ENCODE measurements at regions of chr2 and their contacts with region 1.

Region 1: GRCh38 chr2:20326163-20326780 is 24.4 kb downstream of the PUM2 start:
- DNase-seq: peak; percentile 72
- H3K4me3 ChIP-seq: no peak overlapping the region
- H3K27ac ChIP-seq: no peak overlapping the region
- H3K4me1 ChIP-seq: peaks cover 23% of the 10 kb centered on the region
- H3K27me3 ChIP-seq: no peaks in the 10 kb centered on the region
- CTCF ChIP-seq: peak; percentile 83 to 84
- POLR2A ChIP-seq: no peak

Region 2: DNA sequence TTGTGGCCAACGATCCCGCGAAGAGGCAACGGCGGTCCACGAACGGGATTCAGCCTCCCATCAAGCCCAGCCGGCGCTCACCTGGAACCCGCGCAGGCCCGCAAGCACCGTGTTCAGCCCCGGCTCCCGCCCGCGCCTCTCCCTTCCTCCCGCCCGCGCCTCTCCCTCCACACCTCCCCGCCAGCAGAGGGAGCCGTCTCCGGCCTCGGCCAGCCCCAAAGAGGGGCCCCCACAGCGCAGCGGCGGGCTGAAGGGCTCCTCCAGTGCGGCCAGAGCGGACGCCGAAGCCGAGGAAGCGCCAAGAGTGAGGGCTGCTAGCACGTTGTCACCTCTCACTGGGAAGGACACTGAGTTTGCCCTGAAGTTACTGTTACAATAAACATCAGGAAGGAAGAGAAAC is 219.5 kb before region 1 on chr2:
- CTCF ChIA-PET with region 1: interaction called, 10 read pairs
- POLR2A ChIA-PET with region 1: no interaction called
- dilution Hi-C with region 1: no loop called
- intact Hi-C with region 1: loop called (anchors 10 kb)
- DNase-seq: peak; percentile 27
- H3K4me3 ChIP-seq: peak overlapping the region in 1 of 3 experiments; percentile 26
- H3K27ac ChIP-seq: no peak overlapping the region
- H3K4me1 ChIP-seq: no peaks in the 10 kb centered on the region
- H3K27me3 ChIP-seq: peaks cover 2 to 3% of the 10 kb centered on the region in 2 experiments
- CTCF ChIP-seq: peak; percentile 47 to 80
- POLR2A ChIP-seq: no peak

Region 3: DNA sequence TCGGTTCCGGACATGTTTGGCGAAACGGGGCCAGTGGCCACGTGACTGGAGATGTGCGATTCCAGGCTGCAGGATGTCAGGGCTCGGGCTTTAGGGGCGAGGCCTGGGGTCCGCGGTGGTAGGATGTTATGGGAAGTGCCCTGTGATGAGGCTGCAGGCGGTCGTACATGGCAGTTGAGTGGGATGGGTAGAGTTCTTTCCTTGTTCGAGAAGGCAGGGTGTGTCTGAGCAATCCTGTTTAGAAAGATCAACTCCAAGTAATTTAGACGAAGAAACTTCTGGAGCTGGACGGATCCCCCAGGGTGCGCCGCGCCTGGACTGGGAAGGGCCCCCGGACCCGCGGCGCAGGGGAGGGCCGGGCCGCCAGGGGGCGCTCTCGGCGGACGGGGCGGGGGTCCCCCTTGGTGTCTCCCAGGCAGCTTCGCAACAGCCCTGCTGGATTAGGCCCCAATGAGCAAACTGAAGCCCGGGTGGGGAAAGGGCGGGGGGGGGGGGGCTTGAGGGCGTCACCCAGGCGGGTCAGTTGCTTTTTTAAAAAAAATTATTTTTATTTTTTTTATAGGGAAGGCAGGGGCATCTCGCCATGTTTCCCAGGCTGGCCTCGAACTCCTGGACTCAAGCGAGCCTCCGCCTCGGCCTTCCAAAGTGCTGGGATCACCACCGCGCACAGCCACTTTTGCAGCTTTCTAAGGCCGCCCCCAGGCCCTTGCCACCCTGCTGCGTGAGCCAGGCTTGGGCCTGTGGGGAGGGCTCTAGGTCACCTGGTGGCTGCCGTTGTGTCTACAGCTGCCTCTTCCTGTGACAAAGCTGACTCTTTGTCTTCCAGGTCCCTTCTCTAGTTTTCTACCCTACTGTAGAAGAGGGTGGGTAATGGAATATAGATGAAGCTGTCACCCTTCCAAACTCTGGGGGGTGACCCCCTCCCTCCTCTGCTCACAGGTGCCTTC is 83.9 kb before region 1 on chr2:
- CTCF ChIA-PET with region 1: interaction called, 12 read pairs
- POLR2A ChIA-PET with region 1: no interaction called
- dilution Hi-C with region 1: no loop called
- intact Hi-C with region 1: no loop called
- DNase-seq: no peak
- H3K4me3 ChIP-seq: no peak overlapping the region
- H3K27ac ChIP-seq: no peak overlapping the region
- H3K4me1 ChIP-seq: no peaks in the 10 kb centered on the region
- H3K27me3 ChIP-seq: peaks cover 2 to 3% of the 10 kb centered on the region in 2 experiments
- CTCF ChIP-seq: peak; percentile 49 to 52
- POLR2A ChIP-seq: no peak

Region 4: DNA sequence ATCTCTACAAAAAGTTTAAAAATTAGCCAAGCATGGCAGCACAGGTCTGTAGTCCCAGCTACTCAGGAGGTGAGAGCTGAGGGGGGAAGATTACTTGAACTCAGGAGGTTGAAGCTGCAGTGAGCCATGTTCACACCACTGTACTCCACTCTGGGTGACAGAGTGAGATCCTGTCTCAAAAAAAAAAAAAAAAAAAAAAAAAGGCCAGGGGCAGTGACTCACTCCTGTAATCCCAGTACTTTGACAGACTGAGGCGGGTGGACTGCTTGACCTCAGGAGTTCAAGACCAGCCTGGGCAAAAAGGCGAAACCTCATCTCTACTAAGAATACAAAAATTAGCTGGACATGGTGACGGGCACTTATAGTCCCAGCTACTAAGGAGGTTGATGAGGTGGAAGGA is 12.6 kb before region 1 on chr2:
- CTCF ChIA-PET with region 1: interaction called, 51 read pairs
- POLR2A ChIA-PET with region 1: interaction called, 3 read pairs
- dilution Hi-C with region 1: no loop called
- intact Hi-C with region 1: no loop called
- DNase-seq: peak; percentile 24
- H3K4me3 ChIP-seq: no peak overlapping the region
- H3K27ac ChIP-seq: peak overlapping the region; percentile 84
- H3K4me1 ChIP-seq: peaks cover 35% of the 10 kb centered on the region
- H3K27me3 ChIP-seq: no peaks in the 10 kb centered on the region
- CTCF ChIP-seq: no peak
- POLR2A ChIP-seq: no peak

Region 5: GRCh38 chr2:20350753-20351554 is 24.7 kb after region 1 on chr2 and contains the start of gene PUM2:
- CTCF ChIA-PET with region 1: interaction called, 10 read pairs
- POLR2A ChIA-PET with region 1: no interaction called
- dilution Hi-C with region 1: no loop called
- intact Hi-C with region 1: loop called (anchors 1 kb)
- DNase-seq: peak; percentile 98
- H3K4me3 ChIP-seq: peak within 1 kb of the TSS; percentile 99 to 100 (median 100)
- H3K27ac ChIP-seq: peak within 1 kb of the TSS; percentile 88
- H3K4me1 ChIP-seq: peaks cover 31% of the 10 kb centered on the region
- H3K27me3 ChIP-seq: no peaks in the 10 kb centered on the region
- CTCF ChIP-seq: no peak
- POLR2A ChIP-seq: peak; percentile 92
- total RNA-seq, gene PUM2: 79.2 and 83.7 TPM in 2 replicates

Region 6: DNA sequence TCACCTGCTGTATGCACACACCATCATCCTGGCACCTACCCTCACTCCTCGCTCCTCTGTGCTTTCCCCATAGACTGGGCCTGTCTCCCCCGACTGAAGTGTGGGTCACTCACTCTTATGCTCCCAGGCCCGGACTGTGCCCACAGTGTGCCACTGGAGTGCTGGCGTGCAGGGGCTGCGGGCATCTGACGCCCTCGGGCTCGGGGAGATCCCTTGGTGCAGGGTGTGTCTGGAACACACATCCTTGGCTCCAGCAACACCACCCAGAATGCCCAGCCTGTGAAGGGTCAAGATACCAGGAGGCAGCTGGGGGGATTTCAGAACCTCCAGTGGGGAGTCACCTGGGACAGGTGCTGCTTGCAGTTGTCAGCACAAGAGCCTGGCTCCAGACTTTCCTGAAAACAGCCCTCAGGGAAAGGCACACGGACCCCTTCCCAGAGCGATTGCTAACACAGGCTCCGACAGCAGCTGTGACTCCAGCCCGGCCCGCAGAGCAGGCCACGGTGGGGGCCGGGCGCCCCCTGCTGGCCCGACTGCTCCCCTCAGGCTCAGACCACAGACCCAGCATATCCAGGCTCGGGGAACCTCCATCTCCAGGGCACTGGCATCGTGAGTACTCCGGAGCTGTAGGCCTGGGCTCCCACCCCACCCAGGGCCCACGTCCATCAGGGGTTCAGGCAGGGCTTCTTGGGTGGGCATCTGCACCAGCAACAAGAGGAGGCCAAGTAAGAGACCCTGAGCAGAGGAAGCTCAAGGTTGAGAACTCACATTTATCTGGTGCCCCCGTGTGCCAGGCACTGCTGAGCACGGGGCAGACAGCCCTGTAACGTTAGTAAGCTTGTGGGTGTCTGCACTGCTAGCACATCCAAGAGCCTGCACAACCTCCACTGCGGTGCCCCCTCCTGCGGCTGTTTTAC is 316.0 kb after region 1 on chr2:
- CTCF ChIA-PET with region 1: interaction called, 7 read pairs
- POLR2A ChIA-PET with region 1: no interaction called
- dilution Hi-C with region 1: no loop called
- intact Hi-C with region 1: loop called (anchors 5 kb)
- DNase-seq: peak; percentile 76
- H3K4me3 ChIP-seq: no peak overlapping the region
- H3K27ac ChIP-seq: no peak overlapping the region
- H3K4me1 ChIP-seq: peaks cover 8% of the 10 kb centered on the region
- H3K27me3 ChIP-seq: no peaks in the 10 kb centered on the region
- CTCF ChIP-seq: peak; percentile 98 to 99
- POLR2A ChIP-seq: no peak